ENCODE measurements at regions of chr6 and their contacts with region 1.

Region 1: GRCh38 chr6:116667623-116668022 is 943 bp downstream of the ZUP1 start:
- DNase-seq: no peak
- H3K4me3 Mint-ChIP-seq: peak overlapping the region; percentile 98
- H3K27ac Mint-ChIP-seq: peak overlapping the region; percentile 95
- H3K4me1 Mint-ChIP-seq: peaks cover 35% of the 10 kb centered on the region
- H3K27me3 Mint-ChIP-seq: peaks cover 3% of the 10 kb centered on the region

Region 2: DNA sequence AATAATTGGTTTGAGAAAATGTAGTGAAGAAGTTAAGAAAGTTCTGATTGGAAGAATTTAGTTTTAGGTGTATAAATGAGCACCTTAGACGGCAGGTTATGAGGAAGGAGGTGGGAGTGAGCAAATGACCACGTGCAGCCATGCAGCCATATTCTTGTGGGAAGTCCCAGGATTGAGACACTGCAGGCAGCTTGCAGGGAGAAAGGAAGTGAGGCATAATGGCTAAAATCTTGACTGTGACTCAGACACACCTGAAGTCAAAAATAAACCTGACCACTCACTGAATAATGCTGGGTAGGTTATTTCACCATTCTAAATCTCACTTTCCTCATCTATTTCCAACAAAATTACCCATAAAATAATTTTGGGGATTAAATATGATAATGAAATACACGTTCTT is 280.2 kb before region 1 on chr6:
- CTCF ChIA-PET with region 1: no interaction called
- POLR2A ChIA-PET with region 1: no interaction called
- intact Hi-C with region 1: loop called (anchors 5 kb)
- DNase-seq: peak; percentile 38
- H3K4me3 Mint-ChIP-seq: no peak overlapping the region
- H3K27ac Mint-ChIP-seq: no peak overlapping the region
- H3K4me1 Mint-ChIP-seq: peaks cover 38% of the 10 kb centered on the region
- H3K27me3 Mint-ChIP-seq: no peaks in the 10 kb centered on the region

Region 3: GRCh38 chr6:116444092-116444491 is 223.5 kb before region 1 on chr6:
- CTCF ChIA-PET with region 1: no interaction called
- POLR2A ChIA-PET with region 1: no interaction called
- intact Hi-C with region 1: no loop called
- DNase-seq: no peak
- H3K4me3 Mint-ChIP-seq: no peak overlapping the region
- H3K27ac Mint-ChIP-seq: no peak overlapping the region
- H3K4me1 Mint-ChIP-seq: peaks cover 7% of the 10 kb centered on the region
- H3K27me3 Mint-ChIP-seq: peaks cover 9% of the 10 kb centered on the region

Region 4: GRCh38 chr6:116531675-116532570 is 135.7 kb before region 1 on chr6:
- CTCF ChIA-PET with region 1: no interaction called
- POLR2A ChIA-PET with region 1: no interaction called
- intact Hi-C with region 1: no loop called
- DNase-seq: peak; percentile 64
- H3K4me3 Mint-ChIP-seq: no peak overlapping the region
- H3K27ac Mint-ChIP-seq: no peak overlapping the region
- H3K4me1 Mint-ChIP-seq: no peaks in the 10 kb centered on the region
- H3K27me3 Mint-ChIP-seq: peaks cover 12% of the 10 kb centered on the region

Region 5: GRCh38 chr6:116615937-116616736 is 51.5 kb before region 1 on chr6 and contains the start of gene RSPH4A:
- CTCF ChIA-PET with region 1: no interaction called
- POLR2A ChIA-PET with region 1: no interaction called
- intact Hi-C with region 1: loop called (anchors 1 kb)
- DNase-seq: peak; percentile 85
- H3K4me3 Mint-ChIP-seq: peak within 1 kb of the TSS; percentile 82
- H3K27ac Mint-ChIP-seq: no peak within 1 kb of the TSS
- H3K4me1 Mint-ChIP-seq: peaks cover 17% of the 10 kb centered on the region
- H3K27me3 Mint-ChIP-seq: no peaks in the 10 kb centered on the region
- total RNA-seq, gene RSPH4A: not detected

Region 6: DNA sequence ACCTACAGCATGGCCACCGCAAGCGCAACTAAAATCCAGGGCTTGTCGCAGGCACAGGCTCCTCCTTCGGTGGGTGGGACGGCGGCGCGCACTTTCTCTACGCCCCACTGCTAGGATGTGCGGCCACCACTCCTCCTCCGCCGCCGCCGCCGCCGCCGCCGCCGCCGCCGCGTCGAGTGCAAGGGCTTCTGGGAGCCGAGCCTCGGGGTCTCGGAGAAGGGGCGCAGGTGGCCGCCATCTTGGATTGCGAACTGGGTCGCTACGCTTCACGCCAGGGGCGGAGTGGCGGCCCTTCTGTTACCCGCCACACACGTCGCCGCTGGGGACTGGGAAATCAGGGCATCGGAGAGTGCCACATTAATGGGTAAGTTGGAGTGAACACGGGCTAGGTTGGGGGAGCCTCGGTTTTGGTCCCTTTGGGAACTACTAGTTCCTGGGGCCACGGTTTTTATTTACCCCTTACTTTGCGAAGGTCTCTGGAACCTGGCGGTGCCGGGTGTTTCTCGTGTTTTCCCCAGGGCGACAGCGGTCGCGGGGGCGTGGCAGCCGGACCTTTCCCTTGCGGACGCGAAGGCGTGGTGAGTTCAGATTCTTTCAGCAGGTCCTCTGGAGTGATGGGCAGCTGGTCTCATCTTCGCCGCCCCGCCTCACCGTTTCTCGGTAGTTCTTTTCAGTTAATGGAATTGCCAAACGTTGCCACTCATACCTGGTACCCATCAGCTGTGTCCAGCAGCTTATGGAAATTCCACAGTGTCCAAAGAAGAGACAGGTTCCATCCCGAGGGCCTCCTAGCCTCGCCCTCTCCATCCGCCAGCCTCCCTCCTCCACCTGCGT is 13.6 kb after region 1 on chr6 and contains the start of gene KPNA5:
- CTCF ChIA-PET with region 1: interaction called, 3 read pairs
- POLR2A ChIA-PET with region 1: interaction called, 12 read pairs
- intact Hi-C with region 1: loop called (anchors 1 kb)
- DNase-seq: peak; percentile 95
- H3K4me3 Mint-ChIP-seq: peak within 1 kb of the TSS; percentile 99
- H3K27ac Mint-ChIP-seq: peak within 1 kb of the TSS; percentile 96
- H3K4me1 Mint-ChIP-seq: peaks cover 41% of the 10 kb centered on the region
- H3K27me3 Mint-ChIP-seq: no peaks in the 10 kb centered on the region
- total RNA-seq, gene KPNA5: 10.0 to 10.2 TPM

Region 7: GRCh38 chr6:116695401-116695800 is 27.8 kb after region 1 on chr6:
- CTCF ChIA-PET with region 1: no interaction called
- POLR2A ChIA-PET with region 1: no interaction called
- intact Hi-C with region 1: loop called (anchors 1 kb)
- DNase-seq: no peak
- H3K4me3 Mint-ChIP-seq: no peak overlapping the region
- H3K27ac Mint-ChIP-seq: no peak overlapping the region
- H3K4me1 Mint-ChIP-seq: peaks cover 39% of the 10 kb centered on the region
- H3K27me3 Mint-ChIP-seq: no peaks in the 10 kb centered on the region

Region 8: GRCh38 chr6:116990679-116991078 is 323.1 kb after region 1 on chr6:
- CTCF ChIA-PET with region 1: no interaction called
- POLR2A ChIA-PET with region 1: no interaction called
- intact Hi-C with region 1: no loop called
- DNase-seq: no peak
- H3K4me3 Mint-ChIP-seq: no peak overlapping the region
- H3K27ac Mint-ChIP-seq: no peak overlapping the region
- H3K4me1 Mint-ChIP-seq: no peaks in the 10 kb centered on the region
- H3K27me3 Mint-ChIP-seq: no peaks in the 10 kb centered on the region

Region 9: GRCh38 chr6:117110737-117111136 is 443.1 kb after region 1 on chr6:
- CTCF ChIA-PET with region 1: no interaction called
- POLR2A ChIA-PET with region 1: no interaction called
- intact Hi-C with region 1: no loop called
- DNase-seq: no peak
- H3K4me3 Mint-ChIP-seq: no peak overlapping the region
- H3K27ac Mint-ChIP-seq: no peak overlapping the region
- H3K4me1 Mint-ChIP-seq: no peaks in the 10 kb centered on the region
- H3K27me3 Mint-ChIP-seq: no peaks in the 10 kb centered on the region

Measured in activated CD4-positive, alpha-beta memory T cell treated with anti-CD3 and anti-CD28 coated beads for 36 hours (primary cell).